ENCODE measurements at regions of chr14 and their contacts with region 1.

Region 1: GRCh38 chr14:35336494-35337268 is 44.5 kb downstream of the PSMA6 start:
- DNase-seq: no peak
- H3K4me3 Mint-ChIP-seq: no peak overlapping the region
- H3K27ac Mint-ChIP-seq: no peak overlapping the region
- H3K4me1 Mint-ChIP-seq: peaks cover 30% of the 10 kb centered on the region
- H3K27me3 Mint-ChIP-seq: no peaks in the 10 kb centered on the region

Region 2: GRCh38 chr14:35277179-35277578 is 59.5 kb before region 1 on chr14:
- CTCF ChIA-PET with region 1: no interaction called
- POLR2A ChIA-PET with region 1: no interaction called
- DNase-seq: no peak
- H3K4me3 Mint-ChIP-seq: no peak overlapping the region
- H3K27ac Mint-ChIP-seq: no peak overlapping the region
- H3K4me1 Mint-ChIP-seq: no peaks in the 10 kb centered on the region
- H3K27me3 Mint-ChIP-seq: no peaks in the 10 kb centered on the region

Region 3: GRCh38 chr14:35326096-35326774 is 10.4 kb before region 1 on chr14:
- CTCF ChIA-PET with region 1: no interaction called
- POLR2A ChIA-PET with region 1: no interaction called
- DNase-seq: no peak
- H3K4me3 Mint-ChIP-seq: no peak overlapping the region
- H3K27ac Mint-ChIP-seq: no peak overlapping the region
- H3K4me1 Mint-ChIP-seq: no peaks in the 10 kb centered on the region
- H3K27me3 Mint-ChIP-seq: no peaks in the 10 kb centered on the region

Region 4: GRCh38 chr14:35365130-35366055 is 28.7 kb after region 1 on chr14:
- CTCF ChIA-PET with region 1: no interaction called
- POLR2A ChIA-PET with region 1: interaction called, 11 read pairs
- DNase-seq: peak; percentile 76
- H3K4me3 Mint-ChIP-seq: no peak overlapping the region
- H3K27ac Mint-ChIP-seq: peak overlapping the region; percentile 66
- H3K4me1 Mint-ChIP-seq: peaks cover 33% of the 10 kb centered on the region
- H3K27me3 Mint-ChIP-seq: no peaks in the 10 kb centered on the region

Region 5: DNA sequence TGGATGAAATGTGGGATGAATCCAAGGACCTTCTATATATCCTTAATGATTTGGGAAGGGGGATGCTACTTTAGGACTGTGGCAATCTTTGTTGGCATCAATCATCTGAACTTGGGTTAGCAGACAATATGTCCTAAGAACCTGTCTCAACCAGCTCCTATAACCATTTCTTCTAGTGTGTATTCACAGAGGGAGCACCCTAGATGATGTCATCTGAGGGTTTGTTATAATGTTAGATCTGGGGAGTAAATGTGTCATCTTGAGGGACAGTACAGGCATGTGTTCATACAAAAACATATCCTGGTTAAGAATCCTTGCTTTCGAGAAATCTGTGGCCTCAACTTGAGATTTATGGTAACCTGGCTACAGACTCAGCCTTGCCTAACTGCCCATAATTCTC is 109.8 kb after region 1 on chr14:
- CTCF ChIA-PET with region 1: no interaction called
- POLR2A ChIA-PET with region 1: no interaction called
- DNase-seq: no peak
- H3K4me3 Mint-ChIP-seq: no peak overlapping the region
- H3K27ac Mint-ChIP-seq: no peak overlapping the region
- H3K4me1 Mint-ChIP-seq: no peaks in the 10 kb centered on the region
- H3K27me3 Mint-ChIP-seq: no peaks in the 10 kb centered on the region

Measured in activated CD4-positive, alpha-beta memory T cell treated with anti-CD3 and anti-CD28 coated beads, Interleukin-2, amount 10 ng/mL, durations not matched to agents 7 days and 5 days (primary cell).